Common myeloid progenitor, CD34-positive (primary cell): ENCODE measurements at regions of chrX and their contacts with region 1.

Region 1: GRCh38 chrX:140733769-140734342 is 24.3 kb downstream of the LINC00632 start:
- DNase-seq: peak; percentile 36 to 61 (median 49)
- H3K4me3 ChIP-seq: no peak overlapping the region
- H3K27ac ChIP-seq: no peak overlapping the region
- H3K4me1 ChIP-seq: no peaks in the 10 kb centered on the region
- H3K27me3 ChIP-seq: no peaks in the 10 kb centered on the region

Region 2: GRCh38 chrX:140701480-140701879 is 32.4 kb before region 1 on chrX:
- CTCF ChIA-PET with region 1: interaction called, 23 read pairs
- POLR2A ChIA-PET with region 1: no interaction called
- DNase-seq: peak; percentile 47 to 71 (median 66)
- H3K4me3 ChIP-seq: no peak overlapping the region
- H3K27ac ChIP-seq: no peak overlapping the region
- H3K4me1 ChIP-seq: peaks cover 0 to 4% (median 1%) of the 10 kb centered on the region in 4 experiments
- H3K27me3 ChIP-seq: peaks cover 0 to 3% (median 0%) of the 10 kb centered on the region in 5 experiments

Region 3: DNA sequence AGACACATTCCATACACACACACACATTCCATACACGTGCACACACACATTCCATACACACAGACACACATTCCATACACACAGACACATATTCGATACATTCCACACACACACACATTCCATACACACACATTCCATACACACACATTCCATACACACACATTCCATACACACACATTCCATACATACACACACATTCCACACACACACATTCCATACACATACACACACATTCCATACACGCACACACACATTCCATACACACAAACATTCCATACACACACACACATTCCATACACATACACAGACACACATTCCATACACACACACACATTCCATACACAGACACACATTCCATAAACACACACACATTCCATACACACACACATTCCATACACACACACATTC is 10.6 kb before region 1 on chrX:
- CTCF ChIA-PET with region 1: no interaction called
- POLR2A ChIA-PET with region 1: no interaction called
- DNase-seq: peak in 1 of 3 donors; percentile 45
- H3K4me3 ChIP-seq: no peak overlapping the region
- H3K27ac ChIP-seq: no peak overlapping the region
- H3K4me1 ChIP-seq: no peaks in the 10 kb centered on the region
- H3K27me3 ChIP-seq: no peaks in the 10 kb centered on the region